Activated B cell treated with CpG ODN at 0.5 μM for 24 hours (primary cell): ENCODE measurements at regions of chrX and their contacts with region 1.

Region 1: DNA sequence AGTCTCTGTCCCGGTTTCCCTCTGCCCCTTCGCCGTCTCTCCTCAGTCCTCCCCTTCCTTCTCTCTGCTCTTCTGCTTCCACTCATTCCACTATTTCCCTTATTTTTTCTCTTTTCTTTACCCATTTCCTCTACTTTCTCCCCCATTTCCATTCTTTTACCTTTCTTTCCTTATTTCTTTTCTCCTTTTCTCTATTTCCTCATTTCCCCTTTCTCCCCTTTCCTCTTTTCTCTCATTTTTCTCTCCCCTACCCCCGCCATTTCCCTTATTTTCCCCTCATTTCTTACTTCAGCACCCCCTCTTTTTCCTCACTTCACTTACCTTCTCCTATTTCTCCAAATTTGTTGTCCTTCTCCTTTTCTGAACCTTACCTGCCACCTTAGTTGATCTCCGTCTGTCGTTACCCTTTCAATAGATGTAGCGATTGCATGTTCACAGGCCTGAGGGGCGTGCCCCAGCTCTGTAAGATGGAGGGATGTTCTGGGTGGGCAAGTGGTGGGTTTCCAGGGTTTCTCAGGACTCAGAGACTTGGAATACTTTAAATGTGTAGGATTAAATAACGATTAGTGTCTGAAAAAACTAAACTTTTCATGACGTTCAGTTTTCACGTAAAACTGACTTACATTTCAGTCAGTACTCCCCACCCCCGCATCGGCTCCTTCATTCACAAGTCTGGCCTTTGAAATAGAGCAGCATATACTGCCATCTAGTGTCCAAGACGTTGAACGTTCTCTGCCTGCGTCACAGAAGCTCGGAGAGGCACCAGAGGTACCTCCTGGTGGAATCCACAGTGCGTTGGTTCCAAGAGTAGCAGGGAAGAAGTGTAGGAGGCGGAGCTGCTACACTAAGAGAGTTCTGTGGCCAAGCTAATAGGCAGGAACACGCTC is 641 bp upstream of the NCBP2L start:
- DNase-seq: peak; percentile 23
- ATAC-seq: peak; percentile 72
- H3K4me3 Mint-ChIP-seq: peak overlapping the region; percentile 87
- H3K27ac Mint-ChIP-seq: peak overlapping the region; percentile 77
- H3K4me1 Mint-ChIP-seq: peaks cover 14% of the 10 kb centered on the region
- H3K27me3 Mint-ChIP-seq: no peaks in the 10 kb centered on the region
- CTCF ChIP-seq: no peak

Region 2: DNA sequence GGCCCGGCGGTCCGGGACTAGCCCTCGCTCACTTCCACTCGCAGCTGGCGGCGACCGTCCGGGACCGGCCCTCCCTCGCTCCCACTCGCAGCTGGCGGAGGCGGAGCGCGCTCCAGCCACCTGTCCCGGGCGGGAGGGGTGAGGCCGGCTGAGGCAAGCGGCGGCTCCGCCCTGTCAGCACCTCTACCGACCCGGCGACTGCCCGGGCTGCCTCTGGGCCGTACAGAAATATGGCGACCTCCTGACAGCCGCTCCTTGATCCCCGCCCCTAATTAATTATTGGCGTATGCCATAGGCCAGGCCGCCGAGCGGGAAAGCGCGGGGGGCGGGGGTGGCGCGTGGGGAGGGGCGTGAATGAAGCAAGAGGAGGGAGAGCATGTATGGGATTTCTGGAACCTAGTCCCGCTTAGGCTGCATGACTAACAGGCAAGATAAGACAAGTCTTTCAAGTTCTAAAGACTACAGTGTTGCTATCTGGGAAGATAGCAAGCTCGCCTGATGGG is 776.8 kb before region 1 on chrX and contains the start of gene MORC4:
- CTCF ChIA-PET with region 1: interaction called, 3 read pairs
- POLR2A ChIA-PET with region 1: no interaction called
- intact Hi-C with region 1: loop called (anchors 1 kb)
- DNase-seq: peak; percentile 42
- ATAC-seq: peak; percentile 88
- H3K4me3 Mint-ChIP-seq: peak within 1 kb of the TSS; percentile 89
- H3K27ac Mint-ChIP-seq: no peak within 1 kb of the TSS
- H3K4me1 Mint-ChIP-seq: peaks cover 10% of the 10 kb centered on the region
- H3K27me3 Mint-ChIP-seq: no peaks in the 10 kb centered on the region
- CTCF ChIP-seq: no peak
- total RNA-seq, gene MORC4: 3.7 and 4.1 TPM in 2 replicates

Region 3: DNA sequence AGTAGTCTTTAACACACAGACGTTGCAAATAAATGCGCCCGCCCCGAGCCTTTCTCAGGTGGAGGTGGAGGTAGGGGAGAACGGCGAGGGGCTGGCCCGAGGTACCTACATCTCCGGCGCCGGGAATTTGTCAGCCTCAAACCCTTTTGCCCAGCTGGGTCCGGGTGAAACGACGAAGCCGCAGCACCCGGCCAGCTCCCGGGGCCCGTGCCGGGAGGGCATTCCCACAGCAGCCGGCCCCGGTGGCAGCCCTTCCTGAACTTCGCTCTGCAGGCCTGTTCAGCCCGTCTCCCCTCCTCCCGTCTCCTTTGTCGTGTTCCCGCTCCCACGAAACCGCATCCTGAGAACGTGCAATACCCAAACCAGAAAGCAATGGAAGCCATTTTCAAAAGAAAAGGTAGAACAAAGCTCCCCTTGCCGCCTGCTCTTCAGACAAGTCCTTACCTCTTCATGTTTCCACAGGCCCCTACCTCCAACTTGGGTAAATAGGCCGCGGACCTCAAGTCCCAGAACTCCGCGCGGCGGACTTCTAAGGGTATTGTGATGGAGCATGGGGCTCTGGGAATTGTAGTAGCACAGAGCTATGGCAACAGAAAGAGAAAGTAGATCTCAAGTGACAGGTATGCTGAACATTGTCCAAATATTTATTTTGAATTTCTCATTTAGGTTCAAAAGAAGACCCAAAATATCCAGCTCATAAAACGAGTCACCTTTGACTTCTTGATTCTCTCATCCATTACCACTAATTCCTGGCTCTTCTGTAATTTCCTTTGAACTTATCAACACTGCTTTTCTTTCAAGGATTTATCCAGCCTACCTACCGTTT is 658.4 kb before region 1 on chrX and contains the start of gene RBM41:
- CTCF ChIA-PET with region 1: no interaction called
- POLR2A ChIA-PET with region 1: no interaction called
- intact Hi-C with region 1: loop called (anchors 5 kb)
- DNase-seq: peak; percentile 39
- ATAC-seq: peak; percentile 99
- H3K4me3 Mint-ChIP-seq: peak within 1 kb of the TSS; percentile 100
- H3K27ac Mint-ChIP-seq: peak within 1 kb of the TSS; percentile 96
- H3K4me1 Mint-ChIP-seq: peaks cover 26% of the 10 kb centered on the region
- H3K27me3 Mint-ChIP-seq: no peaks in the 10 kb centered on the region
- CTCF ChIP-seq: no peak
- total RNA-seq, gene RBM41: 16.5 and 18.5 TPM in 2 replicates

Region 4: DNA sequence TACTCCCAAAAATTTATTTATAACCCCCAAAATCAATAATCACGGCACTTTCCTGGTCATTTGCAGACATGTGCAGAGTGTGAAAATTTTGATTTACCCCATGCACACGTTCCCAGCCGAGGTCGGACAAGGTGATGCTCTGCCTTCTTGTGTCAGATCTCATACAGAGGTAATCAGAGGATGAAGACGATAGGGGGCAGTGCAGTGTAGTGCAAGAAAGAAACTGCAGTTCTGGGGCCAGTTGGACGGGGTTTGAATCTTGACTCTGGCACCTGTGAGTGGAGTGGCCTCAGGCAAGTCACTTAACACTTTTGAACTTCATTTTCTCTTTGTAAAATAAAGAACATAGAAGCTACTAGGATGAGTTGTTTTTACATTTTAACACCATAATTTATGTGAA is 239.1 kb before region 1 on chrX:
- CTCF ChIA-PET with region 1: no interaction called
- POLR2A ChIA-PET with region 1: no interaction called
- intact Hi-C with region 1: loop called (anchors 5 kb)
- DNase-seq: no peak
- ATAC-seq: no peak
- H3K4me3 Mint-ChIP-seq: no peak overlapping the region
- H3K27ac Mint-ChIP-seq: no peak overlapping the region
- H3K4me1 Mint-ChIP-seq: peaks cover 5% of the 10 kb centered on the region
- H3K27me3 Mint-ChIP-seq: no peaks in the 10 kb centered on the region
- CTCF ChIP-seq: no peak

Region 5: GRCh38 chrX:107654872-107655761 is 121.8 kb before region 1 on chrX:
- CTCF ChIA-PET with region 1: interaction called, 146 read pairs
- POLR2A ChIA-PET with region 1: interaction called, 7 read pairs
- intact Hi-C with region 1: loop called (anchors 1 kb)
- DNase-seq: peak; percentile 40
- ATAC-seq: peak; percentile 86
- H3K4me3 Mint-ChIP-seq: no peak overlapping the region
- H3K27ac Mint-ChIP-seq: no peak overlapping the region
- H3K4me1 Mint-ChIP-seq: peaks cover 10% of the 10 kb centered on the region
- H3K27me3 Mint-ChIP-seq: no peaks in the 10 kb centered on the region
- CTCF ChIP-seq: no peak

Region 6: GRCh38 chrX:107716816-107717700 is 59.8 kb before region 1 on chrX:
- CTCF ChIA-PET with region 1: interaction called, 40 read pairs
- POLR2A ChIA-PET with region 1: interaction called, 38 read pairs
- intact Hi-C with region 1: loop called (anchors 1 kb)
- DNase-seq: peak; percentile 73
- ATAC-seq: peak; percentile 56
- H3K4me3 Mint-ChIP-seq: peak overlapping the region; percentile 94
- H3K27ac Mint-ChIP-seq: peak overlapping the region; percentile 99
- H3K4me1 Mint-ChIP-seq: peaks cover 81% of the 10 kb centered on the region
- H3K27me3 Mint-ChIP-seq: no peaks in the 10 kb centered on the region
- CTCF ChIP-seq: no peak

Region 7: GRCh38 chrX:108070891-108071290 is 294.0 kb after region 1 on chrX:
- CTCF ChIA-PET with region 1: no interaction called
- POLR2A ChIA-PET with region 1: no interaction called
- intact Hi-C with region 1: loop called (anchors 1 kb)
- DNase-seq: no peak
- ATAC-seq: no peak
- H3K4me3 Mint-ChIP-seq: no peak overlapping the region
- H3K27ac Mint-ChIP-seq: no peak overlapping the region
- H3K4me1 Mint-ChIP-seq: peaks cover 3% of the 10 kb centered on the region
- H3K27me3 Mint-ChIP-seq: no peaks in the 10 kb centered on the region
- CTCF ChIP-seq: no peak